ENCODE measurements at regions of chr9 and their contacts with region 1.

Region 1: GRCh38 chr9:90102292-90102901 is 497.6 kb downstream of the GADD45G start:
- DNase-seq: peak; percentile 91
- H3K4me3 Mint-ChIP-seq: no peak overlapping the region
- H3K27ac Mint-ChIP-seq: no peak overlapping the region
- H3K4me1 Mint-ChIP-seq: peaks cover 5% of the 10 kb centered on the region
- H3K27me3 Mint-ChIP-seq: no peaks in the 10 kb centered on the region
- CTCF ChIP-seq: peak; percentile 84

Region 2: DNA sequence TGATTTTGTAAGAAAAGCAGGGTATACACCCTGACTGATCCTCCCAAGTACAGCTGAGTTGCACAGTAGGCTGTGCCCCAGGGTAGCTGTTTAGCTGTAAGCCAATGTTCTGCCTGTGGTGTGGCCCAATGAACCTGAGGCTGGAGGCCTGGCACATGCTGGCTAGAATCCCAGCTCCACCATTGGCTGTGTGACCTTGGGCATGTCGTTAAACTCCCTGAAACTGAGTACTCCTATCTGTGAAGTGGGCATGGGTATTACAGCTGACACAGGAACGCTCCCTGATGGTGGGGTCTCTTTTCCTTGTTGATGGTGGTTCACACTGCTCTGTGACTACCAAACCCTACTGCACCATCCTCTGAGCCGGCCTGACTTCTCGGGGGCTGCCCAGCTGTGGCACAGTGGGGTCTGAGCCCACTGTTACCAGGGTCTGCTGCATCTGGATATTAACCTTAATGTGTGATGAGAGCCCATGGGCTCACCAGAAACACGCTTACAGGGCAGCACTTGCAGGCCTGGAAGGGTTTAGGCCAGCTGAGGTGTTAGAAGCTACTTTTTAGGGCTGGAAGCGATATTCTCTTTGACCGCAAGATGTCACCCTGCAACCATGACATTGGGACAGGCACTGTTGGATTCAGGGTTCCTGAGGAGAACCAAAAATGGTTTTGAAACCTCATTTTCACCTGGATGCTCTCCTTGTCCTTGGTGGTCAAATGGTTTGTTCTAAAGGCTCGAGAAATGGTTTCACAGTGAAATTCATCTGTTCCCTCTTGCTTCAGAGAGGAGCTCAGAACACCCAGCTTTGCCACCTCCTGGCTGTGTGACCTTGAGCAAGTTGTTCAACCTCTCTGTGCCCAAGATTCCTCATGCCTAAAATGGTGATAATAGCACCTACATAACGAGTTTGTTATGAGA is 504.4 kb before region 1 on chr9:
- CTCF ChIA-PET with region 1: interaction called, 382 read pairs
- POLR2A ChIA-PET with region 1: interaction called, 8 read pairs
- intact Hi-C with region 1: loop called (anchors 1 kb)
- DNase-seq: peak; percentile 78
- H3K4me3 Mint-ChIP-seq: no peak overlapping the region
- H3K27ac Mint-ChIP-seq: no peak overlapping the region
- H3K4me1 Mint-ChIP-seq: peaks cover 4% of the 10 kb centered on the region
- H3K27me3 Mint-ChIP-seq: peaks cover 60% of the 10 kb centered on the region
- CTCF ChIP-seq: peak; percentile 74

Region 3: GRCh38 chr9:89919169-89919681 is 183.2 kb before region 1 on chr9:
- CTCF ChIA-PET with region 1: no interaction called
- POLR2A ChIA-PET with region 1: no interaction called
- intact Hi-C with region 1: loop called (anchors 5 kb)
- DNase-seq: peak; percentile 43
- H3K4me3 Mint-ChIP-seq: no peak overlapping the region
- H3K27ac Mint-ChIP-seq: no peak overlapping the region
- H3K4me1 Mint-ChIP-seq: peaks cover 5% of the 10 kb centered on the region
- H3K27me3 Mint-ChIP-seq: peaks cover 11% of the 10 kb centered on the region
- CTCF ChIP-seq: no peak

Region 4: GRCh38 chr9:89999534-90000370 is 102.6 kb before region 1 on chr9:
- CTCF ChIA-PET with region 1: interaction called, 13 read pairs
- POLR2A ChIA-PET with region 1: interaction called, 3 read pairs
- intact Hi-C with region 1: loop called (anchors 5 kb)
- DNase-seq: peak; percentile 55
- H3K4me3 Mint-ChIP-seq: no peak overlapping the region
- H3K27ac Mint-ChIP-seq: peak overlapping the region; percentile 5
- H3K4me1 Mint-ChIP-seq: peaks cover 6% of the 10 kb centered on the region
- H3K27me3 Mint-ChIP-seq: no peaks in the 10 kb centered on the region
- CTCF ChIP-seq: no peak

Region 5: GRCh38 chr9:90112788-90113187 is 10.4 kb after region 1 on chr9:
- CTCF ChIA-PET with region 1: interaction called, 10 read pairs
- POLR2A ChIA-PET with region 1: interaction called, 3 read pairs
- intact Hi-C with region 1: no loop called
- DNase-seq: no peak
- H3K4me3 Mint-ChIP-seq: no peak overlapping the region
- H3K27ac Mint-ChIP-seq: no peak overlapping the region
- H3K4me1 Mint-ChIP-seq: peaks cover 13% of the 10 kb centered on the region
- H3K27me3 Mint-ChIP-seq: no peaks in the 10 kb centered on the region
- CTCF ChIP-seq: no peak

Region 6: DNA sequence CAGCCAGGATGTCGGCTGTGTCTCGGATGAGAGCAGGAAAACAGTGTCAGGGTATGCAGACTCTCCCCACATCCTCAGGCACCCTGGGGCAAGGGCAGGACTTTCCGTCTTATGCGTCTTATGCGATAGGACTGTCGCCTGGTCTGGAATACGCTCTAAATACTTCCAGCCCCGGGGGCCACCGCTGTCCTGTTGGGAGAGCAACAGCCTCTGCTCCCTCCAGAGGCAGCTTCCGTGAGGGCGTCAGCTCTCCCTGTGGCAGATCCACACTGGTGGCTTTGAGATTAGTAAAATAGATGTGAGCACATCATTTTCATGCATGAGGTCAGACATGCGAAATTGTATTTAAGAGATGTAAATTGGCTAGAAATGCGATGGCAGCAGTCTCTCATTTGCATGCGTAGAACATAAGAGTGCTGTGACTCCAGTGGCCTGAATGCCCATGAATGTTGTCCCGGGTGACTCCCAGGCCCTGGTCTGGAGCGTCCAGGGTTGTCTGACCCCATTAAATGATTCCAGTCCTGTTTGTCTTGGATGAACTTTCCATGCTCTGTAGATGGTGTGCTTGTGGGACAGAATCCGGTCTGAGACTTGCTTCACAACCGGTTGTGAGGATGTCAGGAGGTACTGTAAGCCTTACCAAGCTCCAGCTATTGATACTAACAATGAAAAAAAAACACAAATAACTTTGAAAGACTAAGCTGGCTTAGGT is 927.4 kb after region 1 on chr9:
- CTCF ChIA-PET with region 1: no interaction called
- POLR2A ChIA-PET with region 1: no interaction called
- intact Hi-C with region 1: no loop called
- DNase-seq: no peak
- H3K4me3 Mint-ChIP-seq: no peak overlapping the region
- H3K27ac Mint-ChIP-seq: no peak overlapping the region
- H3K4me1 Mint-ChIP-seq: peaks cover 5% of the 10 kb centered on the region
- H3K27me3 Mint-ChIP-seq: no peaks in the 10 kb centered on the region
- CTCF ChIP-seq: no peak

Measured in MCF 10A (cell line).